ENCODE measurements at regions of chr11 and their contacts with region 1.

Region 1: DNA sequence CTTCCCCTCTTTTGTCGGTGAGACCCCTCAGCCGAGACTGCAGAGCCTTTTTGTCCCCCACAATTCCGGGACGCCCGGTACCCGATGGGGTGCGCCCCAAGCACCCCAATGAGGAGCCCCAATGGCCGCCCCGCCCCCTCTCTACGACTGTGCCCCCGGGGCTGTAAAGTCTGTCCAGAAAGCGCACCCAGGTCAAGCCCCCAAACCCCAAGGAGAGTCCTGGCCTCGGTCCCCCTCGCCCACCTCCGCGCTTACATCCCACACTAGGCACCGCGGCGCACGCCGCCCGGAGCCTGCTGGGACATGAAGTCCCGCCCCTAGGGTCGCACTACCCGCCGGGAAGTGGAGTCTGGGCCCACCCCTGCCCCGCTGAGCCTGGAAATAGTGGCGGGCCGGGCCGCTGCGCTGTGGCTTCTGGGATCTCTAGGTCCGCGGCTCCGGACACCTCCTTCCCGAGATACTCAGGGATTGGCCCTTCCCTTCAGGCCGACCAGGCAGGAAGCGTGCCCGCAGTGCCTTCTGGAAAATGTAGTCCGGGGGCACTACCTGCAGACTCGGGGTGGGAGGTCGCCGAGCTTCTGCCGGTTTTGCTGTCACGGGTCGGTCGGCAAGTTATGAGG is at the start of gene MEN1:
- DNase-seq: peak; percentile 96 to 98 (median 97)
- ATAC-seq: peak; percentile 99 to 100 (median 99)
- H3K4me3 ChIP-seq: peak within 1 kb of the TSS; percentile 61 to 87 (median 74)
- H3K27ac ChIP-seq: peak within 1 kb of the TSS in 11 of 12 donors; percentile 27 to 81 (median 69)
- H3K4me1 ChIP-seq: peaks cover 0 to 18% (median 9%) of the 10 kb centered on the region in 12 donors
- H3K27me3 ChIP-seq: no peaks in the 10 kb centered on the region
- CTCF ChIP-seq: peak in 1 of 12 donors; percentile 26
- POLR2A ChIP-seq: peak in 1 of 2 donors; percentile 80
- total RNA-seq, gene MEN1: 6.6 to 15.0 (median 9.0) TPM

Region 2: DNA sequence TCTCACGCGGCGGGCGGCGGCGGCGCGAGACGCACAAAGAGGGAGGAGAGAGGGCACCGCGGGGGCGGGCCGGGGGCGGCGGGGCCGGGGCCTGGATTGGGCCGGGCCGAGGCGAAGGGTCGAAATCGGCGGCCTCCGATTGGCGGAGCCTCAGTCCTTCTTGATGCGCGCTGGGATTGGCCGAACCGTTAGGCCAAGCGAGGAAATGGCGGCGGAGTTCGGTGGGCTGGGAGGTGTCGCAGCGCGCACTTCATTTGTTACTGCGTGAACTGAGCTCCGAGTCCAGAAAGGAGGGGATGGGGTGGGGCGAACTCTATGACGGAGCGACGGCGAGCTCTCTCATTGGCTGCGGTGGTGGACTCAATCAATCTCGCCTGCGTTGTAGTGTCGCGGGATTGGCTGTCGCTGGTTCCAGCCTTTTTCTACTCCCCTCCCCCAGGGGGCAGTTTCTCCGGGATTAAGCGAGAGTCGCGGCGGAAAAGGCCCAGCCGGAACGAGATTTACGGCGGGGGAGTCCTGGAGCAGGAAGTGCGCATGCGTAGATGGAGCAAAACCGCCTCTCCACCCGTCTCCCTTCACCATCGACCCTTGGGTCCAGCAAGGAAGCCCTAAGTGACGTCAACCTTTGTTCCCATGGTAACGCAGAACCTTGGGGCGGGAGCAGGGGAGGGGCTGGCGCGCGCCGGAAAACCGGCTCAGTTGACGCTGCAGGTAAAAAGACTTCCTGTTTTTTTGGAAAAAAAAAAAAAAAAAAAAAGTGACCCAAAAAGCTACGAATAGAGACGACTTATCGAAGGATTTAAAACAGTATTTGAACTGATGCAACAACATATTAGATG is 31.7 kb before region 1 on chr11 and contains the start of gene SF1:
- intact Hi-C with region 1: loop called in 1 of 10 experiments (anchors 2 kb)
- DNase-seq: peak; percentile 98 to 100 (median 99)
- ATAC-seq: peak; percentile 93 to 97 (median 96)
- H3K4me3 ChIP-seq: peak within 1 kb of the TSS; percentile 77 to 99 (median 92)
- H3K27ac ChIP-seq: peak within 1 kb of the TSS; percentile 98 to 100 (median 99)
- H3K4me1 ChIP-seq: peaks cover 0 to 46% (median 39%) of the 10 kb centered on the region in 12 donors
- H3K27me3 ChIP-seq: no peaks in the 10 kb centered on the region
- CTCF ChIP-seq: peak in 7 of 12 donors; percentile 6 to 53 (median 41)
- POLR2A ChIP-seq: peak; percentile 90 to 97
- total RNA-seq, gene SF1: 103 to 349 (median 157) TPM

Measured in heart left ventricle (tissue), 16 donors.